ENCODE measurements at regions of chr13 and their contacts with region 1.

Region 1: GRCh38 chr13:112873851-112874750 is 94.9 kb upstream of the MCF2L start:
- DNase-seq: peak; percentile 52 to 67
- ATAC-seq: peak; percentile 94 to 98
- H3K4me3 ChIP-seq: no peak overlapping the region
- H3K27ac ChIP-seq: no peak overlapping the region
- H3K4me1 ChIP-seq: no peaks in the 10 kb centered on the region
- CTCF ChIP-seq: peak; percentile 68
- EP300 ChIP-seq: no peak
- POLR2A ChIP-seq: no peak
- RAD21 ChIP-seq: peak; percentile 76 to 79

Region 2: GRCh38 chr13:112634102-112634501 is 240.0 kb before region 1 on chr13:
- CTCF ChIA-PET with region 1: interaction called, 27 read pairs
- POLR2A ChIA-PET with region 1: no interaction called
- DNase-seq: no peak
- ATAC-seq: no peak
- H3K4me3 ChIP-seq: no peak overlapping the region
- H3K27ac ChIP-seq: no peak overlapping the region
- H3K4me1 ChIP-seq: no peaks in the 10 kb centered on the region
- CTCF ChIP-seq: no peak
- EP300 ChIP-seq: no peak
- POLR2A ChIP-seq: no peak
- RAD21 ChIP-seq: no peak

Region 3: DNA sequence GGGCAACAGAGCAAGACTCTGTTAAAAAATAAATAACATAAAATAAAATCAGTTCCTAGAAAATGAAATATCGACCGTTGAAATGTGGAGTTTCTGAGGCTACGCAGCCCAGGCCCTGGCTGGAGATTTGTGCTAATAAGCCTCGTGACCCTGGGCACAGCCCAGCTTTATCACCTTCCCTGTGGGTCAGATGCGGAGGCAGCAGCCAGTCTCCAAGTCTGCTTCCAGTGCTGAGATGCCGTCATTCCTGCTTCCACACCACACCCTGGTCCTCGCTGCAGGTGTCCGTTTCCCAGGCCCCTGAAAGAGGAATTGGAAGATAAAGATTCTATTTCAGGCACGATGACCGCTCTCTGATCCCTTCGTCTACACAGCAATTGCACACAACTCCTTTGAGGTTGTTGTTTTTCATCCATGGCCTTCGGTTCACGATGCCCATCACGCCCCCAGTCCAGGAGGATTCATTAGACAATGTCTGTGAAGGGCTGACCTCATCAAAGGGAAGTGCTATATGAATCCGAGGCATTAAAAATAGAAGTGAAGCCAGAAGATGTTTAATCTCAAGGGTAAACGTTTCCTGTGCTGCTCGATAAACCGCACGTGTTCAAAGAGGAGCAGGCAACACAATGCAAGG is 232.5 kb before region 1 on chr13:
- CTCF ChIA-PET with region 1: interaction called, 27 read pairs
- POLR2A ChIA-PET with region 1: no interaction called
- DNase-seq: no peak
- ATAC-seq: no peak
- H3K4me3 ChIP-seq: no peak overlapping the region
- H3K27ac ChIP-seq: no peak overlapping the region
- H3K4me1 ChIP-seq: 0 out of 3 replicates have a peak, but pooled peaks cover 5% of the 10 kb centered on the region
- CTCF ChIP-seq: no peak
- EP300 ChIP-seq: no peak
- POLR2A ChIP-seq: no peak
- RAD21 ChIP-seq: no peak

Region 4: DNA sequence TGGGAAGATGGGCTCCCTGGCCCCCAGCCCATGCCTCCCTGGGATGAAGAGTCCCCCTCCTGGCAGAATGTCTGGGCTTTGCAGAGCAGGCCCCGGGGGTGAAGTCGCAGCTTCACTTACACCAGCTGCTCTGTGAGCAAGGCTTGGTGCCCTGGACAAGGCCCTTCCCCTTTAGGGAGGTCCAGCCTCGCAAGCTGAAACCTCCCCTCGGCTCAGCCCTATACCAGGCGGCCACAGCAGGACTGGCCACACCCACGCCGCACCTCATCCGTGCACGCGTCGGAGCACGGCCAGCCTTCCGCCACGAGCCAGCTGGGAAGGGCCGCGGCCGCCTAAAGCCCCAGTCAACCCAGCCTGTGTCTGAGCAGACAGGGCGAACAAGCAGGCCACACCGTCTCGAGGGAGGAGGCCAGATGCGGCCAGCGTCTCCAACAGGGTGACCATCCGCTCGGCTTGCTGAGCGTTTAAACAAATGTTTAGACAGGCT is 11.7 kb after region 1 on chr13:
- CTCF ChIA-PET with region 1: interaction called, 26 read pairs
- POLR2A ChIA-PET with region 1: no interaction called
- DNase-seq: peak; percentile 20 to 61
- ATAC-seq: peak; percentile 88 to 95
- H3K4me3 ChIP-seq: no peak overlapping the region
- H3K27ac ChIP-seq: no peak overlapping the region
- H3K4me1 ChIP-seq: no peaks in the 10 kb centered on the region
- CTCF ChIP-seq: no peak
- EP300 ChIP-seq: no peak
- POLR2A ChIP-seq: 0 out of 2 replicates have a peak, but pooled peaks have one; percentile 16
- RAD21 ChIP-seq: no peak

Measured in A549 (cell line).